OCI-LY7 (cell line): ENCODE measurements at regions of chr3 and their contacts with region 1.

Region 1: GRCh38 chr3:36700537-36701248 is 63.7 kb downstream of the DCLK3 start:
- DNase-seq: peak; percentile 69
- H3K4me3 ChIP-seq: no peak overlapping the region
- H3K27ac ChIP-seq: no peak overlapping the region
- H3K4me1 ChIP-seq: no peaks in the 10 kb centered on the region
- CTCF ChIP-seq: peak; percentile 96

Region 2: DNA sequence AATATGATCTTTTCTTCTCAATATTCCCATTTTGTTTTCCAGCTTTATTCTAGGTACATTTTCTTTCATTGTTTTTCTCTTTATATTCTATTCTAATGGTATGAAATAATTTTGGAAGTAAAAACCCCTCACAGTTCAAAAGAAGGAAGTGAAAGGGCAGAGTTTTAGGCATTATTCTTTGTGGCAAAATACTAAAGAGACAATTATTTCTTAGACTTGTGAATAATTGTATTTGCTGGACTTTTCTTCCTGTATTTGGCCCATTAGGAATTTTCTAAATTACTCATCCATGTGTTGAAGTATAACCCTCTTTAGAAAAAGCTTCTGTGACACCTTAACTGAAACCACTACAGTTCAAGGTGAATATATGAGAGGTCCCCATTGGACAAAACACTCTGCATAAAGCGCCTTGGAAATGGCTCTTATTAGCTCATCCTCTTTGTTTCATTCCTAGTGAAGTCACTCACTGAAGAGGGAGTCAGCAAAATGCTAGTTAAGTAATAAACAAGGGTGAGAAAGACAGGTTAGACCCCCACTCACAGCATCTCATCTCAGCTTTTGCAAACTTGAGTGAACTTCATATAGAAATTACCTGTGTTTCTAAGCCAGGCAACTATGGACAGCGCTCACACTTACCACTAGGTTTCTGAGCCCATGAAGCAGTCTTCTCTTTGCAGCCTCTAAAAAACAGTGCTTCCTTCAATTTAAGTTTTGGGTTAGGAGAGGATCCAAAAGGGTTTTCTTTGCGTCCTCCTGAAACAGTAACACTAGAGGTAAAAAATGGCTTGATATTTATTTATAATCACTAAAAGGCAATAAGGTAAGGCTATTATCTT is 733.8 kb before region 1 on chr3:
- CTCF ChIA-PET with region 1: no interaction called
- POLR2A ChIA-PET with region 1: no interaction called
- intact Hi-C with region 1: loop called (anchors 1 kb)
- DNase-seq: no peak
- H3K4me3 ChIP-seq: no peak overlapping the region
- H3K27ac ChIP-seq: no peak overlapping the region
- H3K4me1 ChIP-seq: no peaks in the 10 kb centered on the region
- CTCF ChIP-seq: no peak

Region 3: DNA sequence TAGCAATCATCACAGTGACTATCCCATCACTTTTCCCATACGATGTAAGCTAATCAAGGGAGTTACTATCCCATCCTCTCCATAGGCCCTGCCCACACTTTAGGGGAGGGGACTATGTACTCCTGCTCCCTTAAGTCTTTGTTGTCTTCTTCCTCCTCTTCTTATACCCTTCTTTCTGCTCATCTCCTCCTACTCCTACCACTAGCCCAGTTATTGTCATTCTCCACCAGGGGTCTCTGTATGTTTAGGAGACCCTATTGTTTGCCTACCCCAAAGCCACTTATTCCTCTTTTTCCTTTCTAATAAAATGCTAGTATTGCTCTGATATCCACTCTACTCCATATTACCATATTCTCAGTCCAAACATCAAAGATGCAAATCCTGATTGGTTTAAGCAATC is 292.5 kb before region 1 on chr3:
- CTCF ChIA-PET with region 1: no interaction called
- POLR2A ChIA-PET with region 1: no interaction called
- intact Hi-C with region 1: loop called (anchors 1 kb)
- DNase-seq: peak; percentile 10
- H3K4me3 ChIP-seq: no peak overlapping the region
- H3K27ac ChIP-seq: no peak overlapping the region
- H3K4me1 ChIP-seq: no peaks in the 10 kb centered on the region
- CTCF ChIP-seq: peak; percentile 71